ENCODE measurements at regions of chr20 and their contacts with region 1.

Region 1: GRCh38 chr20:25148181-25148981 is 47.1 kb upstream of the ENTPD6 start:
- DNase-seq: peak; percentile 78
- H3K4me3 Mint-ChIP-seq: peak overlapping the region; percentile 82
- H3K27ac Mint-ChIP-seq: peak overlapping the region; percentile 75
- H3K4me1 Mint-ChIP-seq: peaks cover 4% of the 10 kb centered on the region
- H3K27me3 Mint-ChIP-seq: peaks cover 31% of the 10 kb centered on the region

Region 2: DNA sequence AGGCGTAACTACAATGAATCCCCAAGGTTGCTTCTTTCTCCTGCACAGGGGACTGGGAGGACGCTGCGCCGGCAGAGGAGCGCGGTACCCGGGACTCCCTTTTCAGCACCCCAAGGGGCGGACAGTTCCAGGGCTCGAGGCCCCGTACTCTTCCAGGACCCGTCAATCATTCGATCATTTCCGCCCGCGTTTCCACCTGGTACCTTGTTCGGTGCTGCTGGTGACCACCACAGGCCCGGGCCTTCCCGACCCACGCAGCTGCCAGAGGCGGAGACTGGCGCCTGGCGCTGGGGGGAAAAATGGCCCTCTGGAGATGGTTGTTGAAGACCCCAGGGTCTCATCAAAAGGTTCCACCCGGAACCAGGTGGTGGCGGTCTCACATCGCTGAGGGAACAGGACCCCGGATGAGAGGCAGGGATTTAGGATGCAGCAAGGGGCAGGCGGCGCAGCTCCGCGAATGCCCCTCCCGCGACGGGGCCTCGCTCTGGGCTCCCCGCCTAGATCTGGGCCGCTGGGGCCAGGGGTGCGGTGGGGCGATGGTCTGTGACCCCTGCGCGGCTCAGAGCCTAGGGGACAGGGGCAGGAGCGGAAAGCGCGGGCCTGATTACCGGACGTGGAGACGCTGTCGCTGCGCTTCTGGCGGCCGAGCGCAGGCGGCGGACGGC is 67.2 kb before region 1 on chr20:
- intact Hi-C with region 1: loop called (anchors 10 kb)
- DNase-seq: peak; percentile 79
- H3K4me3 Mint-ChIP-seq: no peak overlapping the region
- H3K27ac Mint-ChIP-seq: no peak overlapping the region
- H3K4me1 Mint-ChIP-seq: peaks cover 9% of the 10 kb centered on the region
- H3K27me3 Mint-ChIP-seq: peaks cover 85% of the 10 kb centered on the region

Measured in activated CD4-positive, alpha-beta T cell treated with anti-CD3 and anti-CD28 coated beads, Interleukin-2, amount 10 ng/mL, durations not matched to agents 24 days and 14 days (primary cell).